Gastrocnemius medialis (tissue), 4 donors: ENCODE measurements at regions of chr3 and their contacts with region 1.

Region 1: DNA sequence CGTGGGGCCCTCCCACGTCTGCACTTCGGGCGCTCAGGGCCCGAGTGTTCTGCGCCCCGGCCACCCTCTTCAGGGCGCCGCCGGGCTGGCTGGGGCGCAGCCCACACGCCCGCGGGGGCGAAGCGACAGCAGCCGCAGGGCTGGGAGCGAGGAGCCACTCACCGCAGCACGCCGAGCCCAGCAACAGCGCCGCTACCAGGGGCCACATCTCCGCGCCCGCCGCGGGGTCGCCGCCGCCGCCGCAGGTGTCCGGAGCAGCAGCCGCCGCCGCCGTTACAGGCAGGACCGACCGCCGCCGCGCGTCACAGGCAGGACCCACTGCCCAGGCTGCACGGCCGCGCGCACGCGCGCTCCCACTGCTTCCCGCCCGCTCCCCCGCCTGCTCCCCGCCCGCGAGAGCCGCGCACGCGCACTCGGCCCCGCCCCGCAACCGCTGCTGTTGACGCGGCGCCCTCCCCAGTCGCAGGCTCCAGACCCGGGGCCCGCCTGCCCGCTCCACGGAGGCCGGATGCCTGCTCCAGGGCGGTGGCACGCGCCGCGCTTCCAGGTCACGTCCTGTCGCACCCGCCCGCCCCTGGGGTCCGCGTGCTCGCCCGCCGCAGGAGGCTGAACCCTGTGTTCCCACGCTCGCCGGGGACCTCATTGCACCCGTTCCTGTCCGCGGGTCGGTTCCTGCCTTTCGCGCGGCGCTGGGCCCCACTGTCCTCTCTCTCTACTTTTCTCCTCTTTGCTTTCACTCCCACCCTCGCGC is at the start of gene CD47:
- DNase-seq: peak; percentile 86 to 87
- ATAC-seq: peak; percentile 87 to 93
- H3K4me3 ChIP-seq: peak within 1 kb of the TSS; percentile 66 to 89 (median 84)
- H3K27ac ChIP-seq: peak within 1 kb of the TSS; percentile 75 to 83 (median 78)
- H3K4me1 ChIP-seq: peaks cover 4 to 7% of the 10 kb centered on the region in 2 donors
- H3K27me3 ChIP-seq: no peaks in the 10 kb centered on the region
- CTCF ChIP-seq: no peak
- POLR2A ChIP-seq: peak; percentile 86 to 89
- total RNA-seq, gene CD47: 14.5 to 30.3 (median 22.4) TPM

Region 2: DNA sequence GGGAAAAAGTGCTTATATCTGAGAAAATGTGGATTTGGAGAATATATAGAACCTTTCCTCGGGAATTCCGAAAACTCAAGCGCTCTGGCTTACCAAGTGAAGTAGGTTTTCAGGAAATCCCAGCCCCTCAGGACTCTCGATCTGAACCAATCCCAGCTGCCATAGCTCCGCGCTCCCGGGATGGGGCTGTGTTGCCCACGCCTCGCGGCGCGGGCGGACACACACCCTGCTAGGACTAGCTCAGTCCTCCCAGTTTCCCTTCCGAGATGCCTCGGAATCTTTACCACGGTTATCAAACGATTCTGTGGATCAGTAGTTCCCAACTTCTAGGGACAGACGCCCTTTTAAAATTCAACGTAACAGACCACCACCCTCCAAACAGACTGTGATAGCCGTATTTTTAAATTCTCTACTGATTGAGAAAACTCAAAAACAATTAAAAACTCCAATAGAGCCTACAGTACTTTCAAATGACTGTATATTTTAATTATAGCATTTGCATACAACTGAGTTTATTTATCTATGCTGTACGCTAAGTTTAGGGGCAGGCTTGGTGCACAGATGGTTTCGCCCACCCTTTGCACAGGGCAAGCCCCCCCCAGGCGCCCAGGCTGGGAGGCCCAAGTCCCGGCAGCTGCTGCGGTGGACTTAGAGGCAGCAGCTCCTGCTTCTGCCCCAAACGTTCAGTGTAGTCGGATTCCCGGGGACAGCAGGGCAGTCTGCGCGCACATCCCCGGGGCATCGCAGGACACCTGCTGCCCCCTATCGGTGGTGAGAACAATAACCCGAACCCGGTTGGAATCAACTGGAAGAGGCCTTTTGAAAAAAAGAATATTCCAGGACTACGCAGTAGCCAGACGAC is 661.3 kb before region 1 on chr3:
- in situ Hi-C with region 1: no loop called
- intact Hi-C with region 1: loop called (anchors 5 kb)
- DNase-seq: peak; percentile 35 to 53
- ATAC-seq: peak; percentile 73 to 81
- H3K4me3 ChIP-seq: peak overlapping the region; percentile 77 to 89 (median 82)
- H3K27ac ChIP-seq: peak overlapping the region; percentile 23 to 84 (median 58)
- H3K4me1 ChIP-seq: peaks cover 3 to 7% of the 10 kb centered on the region in 2 donors
- H3K27me3 ChIP-seq: no peaks in the 10 kb centered on the region
- CTCF ChIP-seq: peak; percentile 52 to 89 (median 80)
- POLR2A ChIP-seq: no peak

Region 3: GRCh38 chr3:107522510-107523288 is 568.2 kb before region 1 on chr3 and contains the start of gene BBX:
- in situ Hi-C with region 1: no loop called
- intact Hi-C with region 1: loop called (anchors 10 kb)
- DNase-seq: peak; percentile 87 to 96
- ATAC-seq: peak; percentile 89 to 91
- H3K4me3 ChIP-seq: peak within 1 kb of the TSS; percentile 74 to 99 (median 94)
- H3K27ac ChIP-seq: peak within 1 kb of the TSS; percentile 94 to 97 (median 96)
- H3K4me1 ChIP-seq: peaks cover 9 to 19% of the 10 kb centered on the region in 2 donors
- H3K27me3 ChIP-seq: no peaks in the 10 kb centered on the region
- CTCF ChIP-seq: peak in 1 of 5 experiments; percentile 27
- POLR2A ChIP-seq: peak; percentile 65 to 90
- total RNA-seq, gene BBX: 15.2 to 48.3 (median 20.1) TPM

Region 4: GRCh38 chr3:107956991-107957900 is 133.6 kb before region 1 on chr3:
- in situ Hi-C with region 1: no loop called
- intact Hi-C with region 1: loop called (anchors 2 kb)
- DNase-seq: peak; percentile 58 to 79
- ATAC-seq: peak; percentile 96 to 97
- H3K4me3 ChIP-seq: peak overlapping the region; percentile 17 to 46 (median 26)
- H3K27ac ChIP-seq: peak overlapping the region; percentile 62 to 75 (median 68)
- H3K4me1 ChIP-seq: peaks cover 10 to 19% of the 10 kb centered on the region in 2 donors
- H3K27me3 ChIP-seq: no peaks in the 10 kb centered on the region
- CTCF ChIP-seq: no peak
- POLR2A ChIP-seq: peak in 1 of 2 donors; percentile 8

Region 5: GRCh38 chr3:107987036-107987947 is 103.6 kb before region 1 on chr3:
- in situ Hi-C with region 1: no loop called
- intact Hi-C with region 1: loop called (anchors 10 kb)
- DNase-seq: peak; percentile 45 to 77
- ATAC-seq: peak; percentile 85 to 87
- H3K4me3 ChIP-seq: no peak overlapping the region
- H3K27ac ChIP-seq: peak overlapping the region in 3 of 4 donors; percentile 22 to 41 (median 31)
- H3K4me1 ChIP-seq: peaks cover 2 to 15% of the 10 kb centered on the region in 2 donors
- H3K27me3 ChIP-seq: no peaks in the 10 kb centered on the region
- CTCF ChIP-seq: no peak
- POLR2A ChIP-seq: no peak

Region 6: DNA sequence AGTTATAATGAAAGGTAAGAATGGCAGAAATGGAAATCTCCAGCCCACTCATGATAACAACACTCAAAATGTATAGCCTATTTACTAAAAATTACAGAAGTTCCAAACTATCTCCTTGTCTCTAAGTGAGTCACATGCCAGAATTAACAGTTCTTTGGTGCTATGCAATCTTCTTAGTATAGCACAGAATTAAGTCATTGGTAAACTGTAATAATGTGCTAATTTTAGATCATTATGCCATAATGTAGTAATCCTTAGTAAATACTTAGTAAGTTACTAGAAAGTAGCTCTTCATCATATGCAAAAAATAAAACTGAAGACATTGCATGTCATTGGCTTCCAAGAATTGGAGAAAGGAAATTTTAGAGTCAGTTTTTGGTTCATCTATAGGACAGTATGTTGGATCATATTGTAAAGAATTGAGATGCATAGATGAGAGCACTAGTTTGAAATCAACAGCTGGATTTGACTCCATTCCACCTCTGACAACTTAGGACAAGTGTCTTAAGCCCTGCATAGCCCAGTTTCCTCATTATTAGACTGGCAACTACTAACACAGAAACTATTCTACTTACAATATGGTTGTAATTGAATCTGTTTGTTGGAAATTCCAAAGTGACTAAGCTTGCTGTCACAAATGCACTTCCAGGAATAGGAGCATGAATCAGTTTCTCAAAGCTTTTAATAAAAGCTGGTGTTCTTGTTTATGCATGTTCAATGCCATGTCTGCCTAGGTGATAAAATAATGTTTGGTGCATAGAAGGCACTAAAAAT is 40.0 kb after region 1 on chr3:
- in situ Hi-C with region 1: no loop called
- intact Hi-C with region 1: loop called (anchors 2 kb)
- DNase-seq: no peak
- ATAC-seq: peak; percentile 91 to 96
- H3K4me3 ChIP-seq: no peak overlapping the region
- H3K27ac ChIP-seq: peak overlapping the region in 3 of 4 donors; percentile 22 to 69 (median 58)
- H3K4me1 ChIP-seq: peaks cover 5 to 13% of the 10 kb centered on the region in 2 donors
- H3K27me3 ChIP-seq: no peaks in the 10 kb centered on the region
- CTCF ChIP-seq: no peak
- POLR2A ChIP-seq: no peak

Region 7: GRCh38 chr3:108221911-108222852 is 131.3 kb after region 1 on chr3 and contains the start of gene IFT57:
- in situ Hi-C with region 1: no loop called
- intact Hi-C with region 1: loop called (anchors 1 kb)
- DNase-seq: peak; percentile 94 to 96
- ATAC-seq: peak; percentile 97 to 99
- H3K4me3 ChIP-seq: peak within 1 kb of the TSS; percentile 85 to 94 (median 89)
- H3K27ac ChIP-seq: peak within 1 kb of the TSS; percentile 68 to 71 (median 70)
- H3K4me1 ChIP-seq: peaks cover 5 to 16% of the 10 kb centered on the region in 2 donors
- H3K27me3 ChIP-seq: no peaks in the 10 kb centered on the region
- CTCF ChIP-seq: no peak
- POLR2A ChIP-seq: peak; percentile 15 to 46
- total RNA-seq, gene IFT57: 7.2 to 18.5 (median 10.7) TPM

Region 8: GRCh38 chr3:108420926-108421325 is 330.1 kb after region 1 on chr3:
- in situ Hi-C with region 1: no loop called
- intact Hi-C with region 1: no loop called
- DNase-seq: no peak
- ATAC-seq: no peak
- H3K4me3 ChIP-seq: no peak overlapping the region
- H3K27ac ChIP-seq: no peak overlapping the region
- H3K4me1 ChIP-seq: no peaks in the 10 kb centered on the region
- H3K27me3 ChIP-seq: no peaks in the 10 kb centered on the region
- CTCF ChIP-seq: no peak
- POLR2A ChIP-seq: no peak